ENCODE measurements at regions of chr15 and their contacts with region 1.

Region 1: GRCh38 chr15:88610701-88611231 is 10.4 kb upstream of the AEN start:
- ATAC-seq: peak in 1 of 8 experiments; percentile 0
- H3K4me3 ChIP-seq: peak overlapping the region in 2 of 5 donors; percentile 10 to 25
- H3K27ac ChIP-seq: peak overlapping the region; percentile 13 to 67
- H3K4me1 ChIP-seq: peaks cover 55 to 63% of the 10 kb centered on the region in 2 donors

Region 2: DNA sequence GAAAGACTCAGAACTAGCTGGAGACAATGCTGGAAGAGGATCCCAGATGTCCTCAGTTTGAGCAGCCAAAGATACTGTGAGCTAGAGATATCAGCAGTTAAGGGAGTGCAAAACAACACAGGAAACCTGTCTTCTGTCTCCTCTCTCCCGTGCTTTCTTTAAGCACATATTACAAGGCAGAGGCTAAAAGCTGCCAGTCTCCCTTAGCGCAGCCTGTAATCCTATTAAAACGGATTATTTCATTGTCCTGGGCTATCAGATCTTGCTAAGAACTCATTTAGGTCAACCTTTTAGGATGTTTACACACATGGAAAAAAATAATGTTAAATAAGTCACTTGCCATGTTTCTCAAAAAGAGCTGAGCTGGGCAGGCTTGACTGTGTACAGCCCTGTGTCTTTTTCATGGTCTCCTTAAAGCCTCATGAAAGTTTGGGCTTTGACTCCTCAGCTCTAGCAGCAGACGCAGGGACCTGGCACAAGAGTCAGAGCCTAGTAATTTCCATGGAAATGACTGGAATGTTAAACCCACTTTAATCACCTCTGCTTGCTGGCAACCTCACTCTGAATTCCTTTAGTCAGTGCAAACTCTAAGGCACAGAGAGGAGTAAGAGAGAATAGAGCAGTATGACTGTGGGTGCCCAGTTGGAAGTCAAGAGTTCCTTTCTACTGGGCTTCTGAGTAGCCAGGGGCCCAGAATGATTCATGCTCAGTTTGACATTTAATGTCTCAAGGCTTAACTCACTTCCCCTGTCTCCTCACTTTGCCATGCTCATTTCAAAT is 846.1 kb before region 1 on chr15:
- in situ Hi-C with region 1: no loop called
- ATAC-seq: peak in 5 of 8 experiments; percentile 25 to 93 (median 44)
- H3K4me3 ChIP-seq: no peak overlapping the region
- H3K27ac ChIP-seq: no peak overlapping the region
- H3K4me1 ChIP-seq: no peaks in the 10 kb centered on the region

Region 3: DNA sequence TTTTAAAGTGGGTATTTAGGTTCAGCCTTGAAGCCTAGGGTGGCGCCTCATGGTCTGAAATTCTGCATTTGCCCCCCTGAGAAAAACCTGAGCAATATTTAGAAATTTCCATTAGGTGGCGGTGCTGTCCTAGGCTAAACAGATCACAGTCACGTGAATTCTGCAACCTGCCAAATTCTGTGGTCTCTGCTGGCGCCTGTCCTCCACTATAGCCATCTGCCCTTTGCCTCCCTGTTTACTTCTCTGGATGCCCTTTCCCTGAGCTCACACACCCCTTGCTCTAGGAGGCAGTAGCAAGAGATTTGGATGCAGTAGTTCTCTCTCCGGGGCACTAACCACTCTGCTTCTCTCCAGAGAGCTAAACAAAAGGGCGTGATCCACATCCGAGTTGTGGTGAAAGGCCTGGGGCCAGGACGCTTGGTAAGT is 134.1 kb before region 1 on chr15:
- in situ Hi-C with region 1: loop called in 7 of 9 experiments (anchors 10 to 25 kb)
- ATAC-seq: peak; percentile 66 to 86 (median 81)
- H3K4me3 ChIP-seq: no peak overlapping the region
- H3K27ac ChIP-seq: no peak overlapping the region
- H3K4me1 ChIP-seq: peaks cover 0 to 5% of the 10 kb centered on the region in 2 donors

Region 4: DNA sequence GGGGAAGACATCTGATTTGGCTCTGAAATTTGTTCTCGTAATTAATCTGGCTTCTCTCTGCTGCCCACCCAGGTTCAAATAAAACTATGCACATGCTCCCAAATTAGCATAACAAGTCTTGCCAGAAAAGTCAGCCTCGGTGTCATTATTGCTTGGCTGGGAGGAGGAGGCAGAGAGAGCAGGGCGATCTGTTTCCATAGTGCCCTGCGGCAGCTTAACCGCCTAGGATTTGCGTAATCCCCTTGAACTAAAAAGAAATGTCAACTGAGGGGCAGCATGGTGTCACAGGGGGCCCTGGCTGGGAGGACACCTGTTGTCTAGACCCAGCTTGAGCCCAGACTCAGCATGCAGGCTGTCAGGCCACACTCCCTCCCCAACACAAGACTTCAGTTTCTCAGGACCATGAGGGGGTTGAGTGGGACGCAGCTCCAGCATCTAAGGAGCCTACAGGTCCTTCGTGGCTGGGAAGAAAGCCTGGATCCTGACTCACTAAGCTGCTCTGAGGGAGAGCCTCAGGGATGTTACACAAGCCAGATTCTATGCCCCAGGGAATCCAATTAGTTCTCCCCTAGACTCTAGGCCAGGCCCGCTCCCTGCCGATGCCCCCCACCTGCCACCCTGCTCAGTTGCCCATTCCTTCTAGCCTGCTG is 126.0 kb before region 1 on chr15:
- in situ Hi-C with region 1: loop called in 5 of 9 experiments (anchors 10 to 25 kb)
- ATAC-seq: peak; percentile 51 to 95 (median 88)
- H3K4me3 ChIP-seq: no peak overlapping the region
- H3K27ac ChIP-seq: peak overlapping the region in 1 of 2 donors; percentile 73
- H3K4me1 ChIP-seq: peaks cover 16 to 36% of the 10 kb centered on the region in 2 donors

Region 5: GRCh38 chr15:88491158-88491557 is 119.6 kb before region 1 on chr15:
- in situ Hi-C with region 1: loop called in 5 of 9 experiments (anchors 10 to 25 kb)
- ATAC-seq: peak in 1 of 8 experiments; percentile 16
- H3K4me3 ChIP-seq: no peak overlapping the region
- H3K27ac ChIP-seq: no peak overlapping the region
- H3K4me1 ChIP-seq: peaks cover 6 to 12% of the 10 kb centered on the region in 2 donors

Measured in motor neuron (in vitro differentiated cells).